Gastrocnemius medialis (tissue), 4 donors: ENCODE measurements at regions of chr5 and their contacts with region 1.

Region 1: DNA sequence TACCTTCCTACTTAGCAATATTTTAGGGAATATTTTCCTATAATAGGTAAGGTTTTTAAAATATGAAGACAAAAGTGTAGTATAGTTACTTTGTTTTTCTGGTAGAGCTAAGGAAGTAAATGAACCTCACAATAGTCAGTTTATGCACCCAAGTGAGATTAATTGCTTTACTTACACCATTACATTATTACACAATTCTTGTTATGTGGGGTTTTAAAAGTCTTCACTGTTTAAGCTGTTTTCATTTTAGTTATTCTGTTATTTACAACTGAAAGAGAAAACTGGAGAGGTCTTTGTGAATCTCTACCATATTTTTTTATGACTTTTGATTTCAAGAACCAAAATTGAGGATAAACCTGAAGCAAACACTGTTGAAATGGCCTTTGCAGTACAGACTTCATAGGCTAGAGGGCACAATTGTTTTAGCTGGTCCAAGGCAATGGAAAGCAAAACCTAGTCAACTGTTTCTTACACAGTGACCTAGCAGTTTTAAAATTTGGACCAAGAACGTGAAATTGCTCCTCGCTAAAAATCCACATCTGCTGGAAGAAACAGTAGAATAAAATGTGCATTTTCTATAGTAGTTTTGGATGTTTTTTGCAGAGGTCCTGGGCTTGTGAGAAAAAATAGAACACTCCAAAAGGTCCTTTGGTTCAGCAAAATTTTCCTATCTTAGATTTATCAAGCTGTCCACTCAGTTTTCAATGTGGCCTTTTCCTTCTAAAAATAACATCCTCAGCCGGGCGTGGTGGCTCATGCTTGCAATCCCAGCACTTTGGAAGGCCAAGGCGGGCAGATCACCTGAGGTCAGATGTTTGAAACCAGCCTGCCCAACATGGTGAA is 66.4 kb upstream of the FER start:
- DNase-seq: peak in 1 of 2 donors; percentile 50
- ATAC-seq: peak; percentile 96 to 100
- H3K4me3 ChIP-seq: peak overlapping the region in 2 of 4 donors; percentile 13 to 44
- H3K27ac ChIP-seq: peak overlapping the region; percentile 41 to 82 (median 76)
- H3K4me1 ChIP-seq: no peaks in the 10 kb centered on the region
- H3K27me3 ChIP-seq: no peaks in the 10 kb centered on the region
- CTCF ChIP-seq: peak in 4 of 5 experiments; percentile 65 to 86 (median 77)
- POLR2A ChIP-seq: no peak

Region 2: GRCh38 chr5:108727651-108728565 is 46.6 kb after region 1 on chr5:
- in situ Hi-C with region 1: no loop called
- intact Hi-C with region 1: loop called (anchors 2 kb)
- DNase-seq: peak; percentile 82 to 90
- ATAC-seq: peak; percentile 93 to 96
- H3K4me3 ChIP-seq: peak overlapping the region; percentile 74 to 90 (median 86)
- H3K27ac ChIP-seq: peak overlapping the region; percentile 84 to 91 (median 87)
- H3K4me1 ChIP-seq: peaks cover 13 to 15% of the 10 kb centered on the region in 2 donors
- H3K27me3 ChIP-seq: no peaks in the 10 kb centered on the region
- CTCF ChIP-seq: no peak
- POLR2A ChIP-seq: peak; percentile 52 to 64